ENCODE measurements at regions of chr11 and their contacts with region 1.

Region 1: GRCh38 chr11:122853971-122854446 is 15.7 kb downstream of the CRTAM start:
- DNase-seq: peak; percentile 66
- ATAC-seq: peak; percentile 62
- H3K4me3 ChIP-seq: no peak overlapping the region
- H3K27ac ChIP-seq: no peak overlapping the region
- H3K4me1 ChIP-seq: no peaks in the 10 kb centered on the region
- H3K27me3 ChIP-seq: peaks cover 2 to 25% of the 10 kb centered on the region in 2 experiments; a peak in 2 of 5 replicates
- CTCF ChIP-seq: peak; percentile 74
- EP300 ChIP-seq: no peak
- POLR2A ChIP-seq: no peak
- RAD21 ChIP-seq: peak; percentile 30; the same call in 1 of the 2 replicates

Region 2: GRCh38 chr11:122578168-122578825 is 275.7 kb before region 1 on chr11:
- CTCF ChIA-PET with region 1: interaction called, 9 read pairs
- POLR2A ChIA-PET with region 1: no interaction called
- in situ Hi-C with region 1: no loop called
- intact Hi-C with region 1: loop called (anchors 1 kb)
- DNase-seq: peak; percentile 6
- ATAC-seq: peak; percentile 58
- H3K4me3 ChIP-seq: no peak overlapping the region
- H3K27ac ChIP-seq: no peak overlapping the region
- H3K4me1 ChIP-seq: peaks cover 8% of the 10 kb centered on the region; the same call in 1 of the 2 replicates
- H3K27me3 ChIP-seq: no peaks in the 10 kb centered on the region
- CTCF ChIP-seq: peak; percentile 45
- EP300 ChIP-seq: no peak
- POLR2A ChIP-seq: no peak
- RAD21 ChIP-seq: no peak

Region 3: GRCh38 chr11:122796128-122796717 is 57.8 kb before region 1 on chr11:
- CTCF ChIA-PET with region 1: interaction called, 11 read pairs
- POLR2A ChIA-PET with region 1: no interaction called
- in situ Hi-C with region 1: no loop called
- intact Hi-C with region 1: loop called (anchors 1 kb)
- DNase-seq: peak; percentile 9
- ATAC-seq: peak; percentile 74
- H3K4me3 ChIP-seq: no peak overlapping the region
- H3K27ac ChIP-seq: no peak overlapping the region
- H3K4me1 ChIP-seq: no peaks in the 10 kb centered on the region
- H3K27me3 ChIP-seq: no peaks in the 10 kb centered on the region
- CTCF ChIP-seq: peak; percentile 70
- EP300 ChIP-seq: no peak
- POLR2A ChIP-seq: no peak
- RAD21 ChIP-seq: no peak

Region 4: DNA sequence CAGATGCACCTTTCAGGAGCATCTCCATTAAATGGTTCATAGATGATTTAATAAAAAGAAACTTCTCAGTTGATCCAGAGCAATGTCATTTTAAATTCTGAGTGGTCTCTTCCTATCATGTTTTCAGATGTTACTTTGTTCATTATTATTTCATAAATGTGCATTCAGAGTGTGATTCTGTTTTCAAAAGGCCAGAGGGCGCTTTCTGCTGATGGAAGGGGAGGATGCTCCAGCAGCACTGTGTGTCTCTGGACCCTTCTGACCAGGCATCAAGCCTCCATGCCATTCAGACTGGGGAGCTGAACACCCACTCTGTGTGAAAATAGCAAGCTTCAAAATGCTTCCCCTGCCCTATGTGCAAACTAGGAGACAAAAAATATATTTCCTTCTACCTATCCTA is 39.6 kb before region 1 on chr11:
- CTCF ChIA-PET with region 1: interaction called, 10 read pairs
- POLR2A ChIA-PET with region 1: no interaction called
- in situ Hi-C with region 1: loop called (anchors 5 kb)
- intact Hi-C with region 1: loop called (anchors 1 kb)
- DNase-seq: peak; percentile 5
- ATAC-seq: peak; percentile 53
- H3K4me3 ChIP-seq: no peak overlapping the region
- H3K27ac ChIP-seq: no peak overlapping the region
- H3K4me1 ChIP-seq: no peaks in the 10 kb centered on the region
- H3K27me3 ChIP-seq: no peaks in the 10 kb centered on the region
- CTCF ChIP-seq: 0 out of 2 replicates have a peak, but pooled peaks have one; percentile 38
- EP300 ChIP-seq: no peak
- POLR2A ChIP-seq: no peak
- RAD21 ChIP-seq: no peak

Region 5: DNA sequence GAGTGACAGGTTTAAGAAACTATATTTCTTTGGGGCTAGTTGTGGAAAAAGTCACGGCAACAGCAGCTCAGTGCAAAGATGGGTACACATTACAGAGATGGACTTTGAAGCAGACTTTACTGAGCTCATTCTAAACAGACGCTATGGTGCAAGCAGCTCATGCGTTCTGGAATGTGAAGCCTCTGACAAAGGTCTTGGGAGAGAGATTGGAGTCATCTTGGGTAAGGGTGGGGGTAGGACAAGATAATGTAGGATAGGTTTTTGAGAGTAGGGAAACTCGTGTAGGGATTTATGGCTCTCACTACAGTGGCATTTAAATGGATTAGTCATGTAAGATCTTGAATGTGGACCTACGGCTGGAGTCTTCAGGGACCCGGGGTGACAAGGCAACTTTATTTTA is 377.2 kb after region 1 on chr11:
- CTCF ChIA-PET with region 1: no interaction called
- POLR2A ChIA-PET with region 1: no interaction called
- in situ Hi-C with region 1: no loop called
- intact Hi-C with region 1: no loop called
- DNase-seq: peak; percentile 28
- ATAC-seq: peak; percentile 86
- H3K4me3 ChIP-seq: no peak overlapping the region
- H3K27ac ChIP-seq: no peak overlapping the region
- H3K4me1 ChIP-seq: peaks cover 11% of the 10 kb centered on the region
- H3K27me3 ChIP-seq: no peaks in the 10 kb centered on the region
- CTCF ChIP-seq: no peak
- EP300 ChIP-seq: no peak
- POLR2A ChIP-seq: no peak
- RAD21 ChIP-seq: no peak